A549 (cell line): ENCODE measurements at regions of chr5 and their contacts with region 1.

Region 1: GRCh38 chr5:79514391-79515105 is 614 bp upstream of the HOMER1 start:
- DNase-seq: peak; percentile 88 to 96
- ATAC-seq: peak; percentile 83 to 90
- H3K4me3 ChIP-seq: peak overlapping the region; percentile 77
- H3K27ac ChIP-seq: peak overlapping the region; percentile 94 to 95
- H3K4me1 ChIP-seq: peaks cover 15% of the 10 kb centered on the region; the same call in 2 of the 3 replicates
- CTCF ChIP-seq: no peak
- EP300 ChIP-seq: no peak
- POLR2A ChIP-seq: peak; percentile 77
- RAD21 ChIP-seq: no peak

Region 2: DNA sequence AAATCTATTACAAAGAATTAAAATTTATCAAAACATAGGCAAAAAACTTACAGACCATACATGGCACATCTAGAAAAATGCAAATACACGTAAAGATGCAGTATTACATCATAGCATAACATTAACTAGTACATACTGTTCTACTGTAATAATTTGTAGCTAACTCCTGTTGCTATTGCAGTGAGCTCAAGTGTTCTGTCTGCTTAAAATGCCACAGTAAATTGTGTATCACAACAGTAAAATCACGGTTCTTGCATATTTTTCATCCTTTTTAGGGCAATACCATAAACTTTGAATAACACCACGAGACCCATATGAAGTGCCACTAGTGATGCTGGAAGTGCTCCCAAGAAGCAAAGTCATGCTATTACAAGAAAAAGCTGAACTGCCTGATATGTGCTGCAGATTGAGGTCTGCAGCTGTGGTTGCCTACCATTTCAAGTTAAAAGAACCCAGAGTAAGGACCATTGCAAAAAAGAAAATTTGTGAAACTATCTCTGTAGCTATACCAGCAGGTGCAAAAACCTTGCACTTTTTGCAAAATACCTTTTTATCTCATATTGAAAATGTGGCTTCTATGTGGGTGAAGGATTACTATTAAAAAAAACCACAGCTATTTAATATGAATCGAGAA is 14.8 kb before region 1 on chr5:
- CTCF ChIA-PET with region 1: no interaction called
- POLR2A ChIA-PET with region 1: interaction called, 14 read pairs
- DNase-seq: no peak
- ATAC-seq: no peak
- H3K4me3 ChIP-seq: no peak overlapping the region
- H3K27ac ChIP-seq: no peak overlapping the region
- H3K4me1 ChIP-seq: peaks cover 19% of the 10 kb centered on the region; the same call in 2 of the 3 replicates
- CTCF ChIP-seq: no peak
- EP300 ChIP-seq: no peak
- POLR2A ChIP-seq: no peak
- RAD21 ChIP-seq: no peak

Region 3: DNA sequence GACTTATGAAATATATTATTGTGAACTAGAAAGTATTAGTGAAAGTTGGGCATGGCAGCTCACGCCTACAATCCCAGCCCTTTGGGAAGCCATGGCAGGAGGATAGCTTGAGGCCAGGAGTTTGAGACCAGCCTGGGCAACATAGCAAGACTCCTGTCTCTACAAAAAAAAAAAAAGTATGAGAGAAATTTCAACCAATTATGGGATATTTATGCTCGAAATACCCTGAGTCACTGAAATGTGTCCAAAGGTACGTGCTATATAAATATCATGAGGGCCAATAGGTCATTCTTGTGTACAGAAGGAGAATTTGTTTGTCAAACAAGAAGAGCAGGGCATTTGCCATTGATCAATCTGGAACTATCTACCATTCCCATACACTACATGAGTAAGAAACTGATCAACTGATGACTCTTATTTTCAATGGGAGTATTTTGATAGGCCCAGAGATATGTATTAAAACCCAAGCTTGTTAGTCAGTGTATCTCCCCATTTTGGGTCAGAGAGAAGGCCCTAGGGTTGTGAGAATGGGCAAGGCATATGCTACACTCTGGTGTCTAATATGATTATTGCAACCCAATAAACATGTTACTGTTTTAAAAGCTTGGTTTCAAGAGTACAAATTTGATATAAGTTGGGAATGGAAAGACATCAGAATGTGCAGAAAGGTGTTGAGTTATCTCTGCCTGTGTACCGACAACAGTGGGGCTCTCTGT is 21.1 kb after region 1 on chr5:
- CTCF ChIA-PET with region 1: no interaction called
- POLR2A ChIA-PET with region 1: no interaction called
- DNase-seq: no peak
- ATAC-seq: peak; percentile 47 to 57; a peak in 4 of 6 replicates
- H3K4me3 ChIP-seq: no peak overlapping the region
- H3K27ac ChIP-seq: no peak overlapping the region
- H3K4me1 ChIP-seq: no peaks in the 10 kb centered on the region
- CTCF ChIP-seq: no peak
- EP300 ChIP-seq: no peak
- POLR2A ChIP-seq: no peak
- RAD21 ChIP-seq: peak in 1 of 2 experiments; percentile 42; a peak in 2 of 5 replicates

Region 4: GRCh38 chr5:79612667-79613198 is 98.2 kb after region 1 on chr5:
- CTCF ChIA-PET with region 1: no interaction called
- POLR2A ChIA-PET with region 1: interaction called, 17 read pairs
- DNase-seq: no peak
- ATAC-seq: peak; percentile 19 to 82; a peak in 4 of 6 replicates
- H3K4me3 ChIP-seq: peak overlapping the region; percentile 68
- H3K27ac ChIP-seq: peak overlapping the region; percentile 81 to 91
- H3K4me1 ChIP-seq: peaks cover 7% of the 10 kb centered on the region; the same call in 1 of the 3 replicates
- CTCF ChIP-seq: no peak
- EP300 ChIP-seq: no peak
- POLR2A ChIP-seq: no peak; the same call in 1 of the 2 replicates
- RAD21 ChIP-seq: no peak